ENCODE measurements at regions of chr16 and their contacts with region 1.

Region 1: GRCh38 chr16:55853114-55853513 is 20.2 kb upstream of the CES1 start:
- DNase-seq: no peak
- H3K4me3 ChIP-seq: no peak overlapping the region
- H3K27me3 ChIP-seq: no peaks in the 10 kb centered on the region
- CTCF ChIP-seq: no peak

Region 2: GRCh38 chr16:55842369-55843104 is 10.6 kb before region 1 on chr16:
- CTCF ChIA-PET with region 1: interaction called, 11 read pairs
- POLR2A ChIA-PET with region 1: no interaction called
- DNase-seq: no peak
- H3K4me3 ChIP-seq: no peak overlapping the region
- H3K27me3 ChIP-seq: peaks cover 3% of the 10 kb centered on the region
- CTCF ChIP-seq: peak; percentile 63

Measured in BJ (cell line).